ENCODE measurements at regions of chr11 and their contacts with region 1.

Region 1: DNA sequence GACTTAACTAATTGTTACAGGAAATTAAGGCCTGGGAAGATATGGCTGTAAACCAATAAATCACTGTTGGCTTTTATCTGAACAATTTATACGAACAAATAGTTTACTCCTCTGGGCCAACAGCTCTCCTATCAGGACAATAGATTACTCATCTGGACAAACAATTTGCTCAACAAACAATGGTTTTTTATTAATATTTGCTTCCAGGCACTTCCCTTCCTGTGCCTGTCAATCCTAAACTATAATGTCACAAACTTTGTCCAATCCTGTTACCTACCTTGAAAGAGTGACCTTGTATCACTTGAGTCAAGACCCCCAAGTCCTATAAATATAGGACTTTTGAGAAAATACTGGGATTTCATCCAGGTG is 87.6 kb upstream of the OR9Q1 start:
- DNase-seq: no peak
- H3K4me3 ChIP-seq: no peak overlapping the region
- H3K4me3 Mint-ChIP-seq: no peak overlapping the region
- H3K27ac Mint-ChIP-seq: no peak overlapping the region
- H3K4me1 ChIP-seq: no peaks in the 10 kb centered on the region
- H3K4me1 Mint-ChIP-seq: no peaks in the 10 kb centered on the region
- H3K27me3 ChIP-seq: no peaks in the 10 kb centered on the region
- H3K27me3 Mint-ChIP-seq: peaks cover 4% of the 10 kb centered on the region
- CTCF ChIP-seq: no peak

Region 2: DNA sequence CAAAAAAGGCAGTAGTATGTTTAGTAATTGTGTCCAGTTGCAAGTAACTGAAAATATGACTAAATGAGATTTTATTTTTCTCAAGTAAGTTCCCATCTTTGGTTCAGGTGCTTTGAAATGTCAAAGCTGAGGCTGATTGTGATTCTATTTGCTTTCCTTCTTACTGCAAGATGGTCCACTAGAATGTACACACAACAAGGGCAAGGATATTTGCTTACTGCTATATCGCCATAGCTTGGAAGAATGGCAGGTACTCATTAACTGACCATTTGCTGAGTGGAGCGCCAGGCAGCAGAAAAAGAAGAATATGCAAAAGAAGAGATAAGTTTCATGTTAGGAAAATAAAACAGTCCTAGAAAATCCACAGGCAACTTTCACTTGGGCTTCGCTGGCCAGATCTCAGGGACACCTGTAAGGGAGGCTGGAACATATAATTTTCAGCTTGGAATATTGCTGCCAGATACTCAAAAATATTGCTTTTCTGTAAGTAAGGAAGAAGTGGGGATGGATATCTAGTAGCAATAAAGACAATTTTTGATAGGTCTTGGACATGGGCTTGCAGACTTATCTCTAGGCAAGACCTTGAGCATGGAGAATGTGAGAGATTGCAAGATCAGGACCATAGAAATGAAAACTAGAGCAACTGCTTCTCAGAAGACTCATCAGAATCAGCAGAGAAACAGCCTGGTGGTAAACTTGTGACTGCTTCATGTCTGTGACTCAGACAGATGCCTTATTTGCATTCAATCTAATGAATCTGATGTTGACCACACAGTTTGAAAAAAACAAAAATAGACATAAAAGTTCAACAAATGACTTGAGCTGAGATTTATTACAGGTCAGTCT is 42.9 kb after region 1 on chr11:
- CTCF ChIA-PET with region 1: no interaction called
- POLR2A ChIA-PET with region 1: no interaction called
- intact Hi-C with region 1: loop called (anchors 1 kb)
- DNase-seq: peak in 1 of 2 experiments; percentile 13
- H3K4me3 ChIP-seq: no peak overlapping the region
- H3K4me3 Mint-ChIP-seq: no peak overlapping the region
- H3K27ac Mint-ChIP-seq: no peak overlapping the region
- H3K4me1 ChIP-seq: peaks cover 13% of the 10 kb centered on the region; the same call in 1 of the 2 replicates
- H3K4me1 Mint-ChIP-seq: no peaks in the 10 kb centered on the region
- H3K27me3 ChIP-seq: no peaks in the 10 kb centered on the region
- H3K27me3 Mint-ChIP-seq: no peaks in the 10 kb centered on the region
- CTCF ChIP-seq: no peak